CD8-positive, alpha-beta T cell (primary cell): ENCODE measurements at regions of chr10 and their contacts with region 1.

Region 1: GRCh38 chr10:64617085-64617484 is 1095.9 kb downstream of the REEP3 start:
- DNase-seq: no peak
- ATAC-seq: no peak
- H3K4me3 ChIP-seq: no peak overlapping the region
- H3K4me3 Mint-ChIP-seq: no peak overlapping the region
- H3K27ac ChIP-seq: no peak overlapping the region
- H3K27ac Mint-ChIP-seq: no peak overlapping the region
- H3K4me1 ChIP-seq: no peaks in the 10 kb centered on the region
- H3K4me1 Mint-ChIP-seq: no peaks in the 10 kb centered on the region
- H3K27me3 ChIP-seq: no peaks in the 10 kb centered on the region
- H3K27me3 Mint-ChIP-seq: no peaks in the 10 kb centered on the region
- CTCF ChIP-seq: no peak

Region 2: DNA sequence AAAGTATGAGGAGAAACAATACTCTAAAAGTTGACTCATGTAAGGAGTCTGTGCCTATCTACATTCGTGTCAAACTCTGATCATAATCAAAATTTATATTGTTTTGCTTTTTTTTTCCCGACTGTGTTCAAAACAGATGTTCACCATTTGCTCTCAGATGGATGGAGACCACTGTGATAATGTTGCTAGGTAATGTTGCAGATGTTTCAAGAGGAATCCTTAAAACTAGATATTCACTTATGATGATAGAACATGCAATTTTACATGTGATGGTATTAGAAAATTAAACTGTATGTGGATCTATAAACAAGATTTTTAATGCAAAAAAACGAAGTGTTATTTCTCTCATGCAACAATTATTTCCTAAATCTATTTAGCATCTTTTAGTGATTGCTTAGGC is 15.8 kb before region 1 on chr10:
- CTCF ChIA-PET with region 1: no interaction called
- POLR2A ChIA-PET with region 1: no interaction called
- intact Hi-C with region 1: loop called in 1 of 2 experiments (anchors 1 kb)
- DNase-seq: no peak
- ATAC-seq: no peak
- H3K4me3 ChIP-seq: no peak overlapping the region
- H3K4me3 Mint-ChIP-seq: no peak overlapping the region
- H3K27ac ChIP-seq: no peak overlapping the region
- H3K27ac Mint-ChIP-seq: no peak overlapping the region
- H3K4me1 ChIP-seq: no peaks in the 10 kb centered on the region
- H3K4me1 Mint-ChIP-seq: no peaks in the 10 kb centered on the region
- H3K27me3 ChIP-seq: no peaks in the 10 kb centered on the region
- H3K27me3 Mint-ChIP-seq: no peaks in the 10 kb centered on the region
- CTCF ChIP-seq: no peak

Region 3: GRCh38 chr10:64682043-64682442 is 65.0 kb after region 1 on chr10:
- CTCF ChIA-PET with region 1: no interaction called
- POLR2A ChIA-PET with region 1: no interaction called
- intact Hi-C with region 1: no loop called
- DNase-seq: no peak
- ATAC-seq: no peak
- H3K4me3 ChIP-seq: no peak overlapping the region
- H3K4me3 Mint-ChIP-seq: no peak overlapping the region
- H3K27ac ChIP-seq: no peak overlapping the region
- H3K27ac Mint-ChIP-seq: no peak overlapping the region
- H3K4me1 ChIP-seq: no peaks in the 10 kb centered on the region
- H3K4me1 Mint-ChIP-seq: no peaks in the 10 kb centered on the region
- H3K27me3 ChIP-seq: no peaks in the 10 kb centered on the region
- H3K27me3 Mint-ChIP-seq: no peaks in the 10 kb centered on the region
- CTCF ChIP-seq: no peak

Region 4: DNA sequence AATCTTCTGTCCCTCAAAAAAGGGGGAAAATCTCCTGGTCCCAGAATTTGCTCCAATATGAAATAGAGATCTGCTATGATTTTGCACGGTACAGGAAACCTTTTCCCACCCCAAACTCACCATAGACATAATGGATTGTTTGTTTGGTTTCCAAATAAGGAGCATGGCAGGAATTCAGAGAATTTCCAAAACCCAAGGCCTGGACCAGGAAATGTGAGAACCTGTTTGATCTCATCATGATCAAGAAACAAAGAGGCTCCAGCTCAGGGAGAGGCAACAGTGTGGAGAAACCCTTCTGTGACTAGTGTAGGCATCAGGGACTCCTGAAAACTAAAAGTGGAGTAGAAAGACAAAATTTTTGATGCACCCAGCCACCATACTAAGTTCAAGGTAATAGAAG is 760.6 kb after region 1 on chr10:
- CTCF ChIA-PET with region 1: no interaction called
- POLR2A ChIA-PET with region 1: no interaction called
- intact Hi-C with region 1: no loop called
- DNase-seq: no peak
- ATAC-seq: no peak
- H3K4me3 ChIP-seq: no peak overlapping the region
- H3K4me3 Mint-ChIP-seq: no peak overlapping the region
- H3K27ac ChIP-seq: no peak overlapping the region
- H3K27ac Mint-ChIP-seq: no peak overlapping the region
- H3K4me1 ChIP-seq: no peaks in the 10 kb centered on the region
- H3K4me1 Mint-ChIP-seq: no peaks in the 10 kb centered on the region
- H3K27me3 ChIP-seq: no peaks in the 10 kb centered on the region
- H3K27me3 Mint-ChIP-seq: no peaks in the 10 kb centered on the region
- CTCF ChIP-seq: no peak